Heart right ventricle (tissue), 16 donors: ENCODE measurements at regions of chr10 and their contacts with region 1.

Region 1: GRCh38 chr10:35447693-35448407 is 111.5 kb downstream of the CCNY start:
- DNase-seq: no peak
- ATAC-seq: peak in 5 of 8 donors; percentile 39 to 57 (median 45)
- H3K4me3 ChIP-seq: peak overlapping the region in 1 of 10 donors; percentile 25
- H3K27ac ChIP-seq: peak overlapping the region; percentile 64 to 95 (median 80)
- H3K4me1 ChIP-seq: peaks cover 37 to 84% (median 79%) of the 10 kb centered on the region in 9 donors
- H3K27me3 ChIP-seq: no peaks in the 10 kb centered on the region
- CTCF ChIP-seq: no peak

Region 2: DNA sequence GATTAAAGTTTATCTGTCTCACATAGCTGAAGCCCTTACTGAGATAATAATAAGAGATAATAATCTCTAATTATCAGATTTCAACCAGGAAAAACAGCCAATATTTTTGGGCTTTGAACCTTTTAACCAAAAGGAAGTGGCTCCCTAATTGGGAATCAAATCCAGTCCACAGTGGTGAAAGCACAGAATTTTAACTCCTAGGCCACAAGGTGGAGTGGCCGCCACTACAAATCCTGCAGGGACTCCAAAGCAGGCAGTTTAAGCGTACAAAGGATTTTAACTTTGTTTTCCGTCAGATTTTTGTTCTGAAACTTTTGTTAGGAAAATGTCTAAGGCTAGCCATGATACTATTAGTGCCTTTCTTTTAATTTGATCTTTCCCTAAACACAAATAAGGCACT is 211.1 kb before region 1 on chr10:
- intact Hi-C with region 1: no loop called
- DNase-seq: no peak
- ATAC-seq: no peak
- H3K4me3 ChIP-seq: no peak overlapping the region
- H3K27ac ChIP-seq: no peak overlapping the region
- H3K4me1 ChIP-seq: peaks cover 0 to 5% (median 0%) of the 10 kb centered on the region in 9 donors
- H3K27me3 ChIP-seq: no peaks in the 10 kb centered on the region
- CTCF ChIP-seq: peak in 8 of 9 donors; percentile 16 to 58 (median 36)

Region 3: DNA sequence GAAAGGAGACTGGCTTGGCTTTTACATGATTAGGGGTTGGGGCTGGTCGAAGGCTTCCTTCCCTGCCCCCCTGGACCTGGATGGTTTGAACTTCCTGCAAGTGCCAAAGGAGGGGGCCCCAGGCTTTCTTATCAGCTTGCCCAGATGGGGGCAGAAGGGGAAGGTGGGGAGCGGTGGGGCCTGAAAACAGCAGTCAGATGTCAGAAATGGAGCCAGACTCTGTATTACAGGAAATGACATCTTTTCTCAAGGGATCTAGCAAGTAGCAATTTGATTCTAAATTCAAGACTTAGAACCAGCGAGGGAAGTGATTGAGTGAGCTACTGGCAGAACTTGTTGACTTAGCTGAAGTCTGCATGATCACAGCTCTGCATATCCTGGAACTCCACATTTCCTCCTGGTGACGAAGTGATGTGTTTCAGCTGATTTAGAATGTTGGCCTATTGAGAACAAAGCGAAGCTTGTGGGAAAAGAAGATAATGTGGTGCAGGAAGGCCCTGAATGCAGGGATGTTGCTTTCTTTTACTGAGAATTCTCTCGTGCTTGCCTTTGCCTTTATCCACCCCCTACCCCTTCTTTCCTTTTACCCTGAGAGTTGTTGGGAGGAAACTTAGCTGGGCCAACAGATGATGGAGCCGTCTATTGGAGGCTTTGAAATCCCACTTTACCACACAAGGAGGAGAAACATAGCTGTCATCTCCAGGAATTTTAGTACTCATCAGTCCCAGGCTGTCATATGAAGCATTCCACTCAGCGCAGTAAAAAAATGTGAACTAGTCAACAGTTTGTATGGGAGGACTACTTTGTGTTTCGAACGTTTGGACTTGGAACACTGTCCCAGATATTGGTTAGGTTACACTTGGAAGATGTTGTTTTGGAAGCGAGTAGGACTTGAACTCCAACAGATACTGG is 68.4 kb before region 1 on chr10:
- intact Hi-C with region 1: loop called in 2 of 10 experiments (anchors 5 to 10 kb)
- DNase-seq: peak; percentile 48 to 80
- ATAC-seq: peak; percentile 76 to 93 (median 88)
- H3K4me3 ChIP-seq: peak overlapping the region in 3 of 10 donors; percentile 6 to 22 (median 11)
- H3K27ac ChIP-seq: peak overlapping the region; percentile 9 to 94 (median 82)
- H3K4me1 ChIP-seq: peaks cover 23 to 97% (median 74%) of the 10 kb centered on the region in 9 donors
- H3K27me3 ChIP-seq: no peaks in the 10 kb centered on the region
- CTCF ChIP-seq: peak in 6 of 9 donors; percentile 22 to 43 (median 31)

Region 4: GRCh38 chr10:35495521-35496119 is 47.8 kb after region 1 on chr10:
- intact Hi-C with region 1: loop called in 1 of 10 experiments (anchors 5 kb)
- DNase-seq: no peak
- ATAC-seq: peak in 6 of 8 donors; percentile 45 to 92 (median 63)
- H3K4me3 ChIP-seq: no peak overlapping the region
- H3K27ac ChIP-seq: peak overlapping the region in 9 of 10 donors; percentile 9 to 50 (median 29)
- H3K4me1 ChIP-seq: peaks cover 8 to 69% (median 44%) of the 10 kb centered on the region in 9 donors
- H3K27me3 ChIP-seq: no peaks in the 10 kb centered on the region
- CTCF ChIP-seq: no peak